ENCODE measurements at regions of chr6 and their contacts with region 1.

Region 1: DNA sequence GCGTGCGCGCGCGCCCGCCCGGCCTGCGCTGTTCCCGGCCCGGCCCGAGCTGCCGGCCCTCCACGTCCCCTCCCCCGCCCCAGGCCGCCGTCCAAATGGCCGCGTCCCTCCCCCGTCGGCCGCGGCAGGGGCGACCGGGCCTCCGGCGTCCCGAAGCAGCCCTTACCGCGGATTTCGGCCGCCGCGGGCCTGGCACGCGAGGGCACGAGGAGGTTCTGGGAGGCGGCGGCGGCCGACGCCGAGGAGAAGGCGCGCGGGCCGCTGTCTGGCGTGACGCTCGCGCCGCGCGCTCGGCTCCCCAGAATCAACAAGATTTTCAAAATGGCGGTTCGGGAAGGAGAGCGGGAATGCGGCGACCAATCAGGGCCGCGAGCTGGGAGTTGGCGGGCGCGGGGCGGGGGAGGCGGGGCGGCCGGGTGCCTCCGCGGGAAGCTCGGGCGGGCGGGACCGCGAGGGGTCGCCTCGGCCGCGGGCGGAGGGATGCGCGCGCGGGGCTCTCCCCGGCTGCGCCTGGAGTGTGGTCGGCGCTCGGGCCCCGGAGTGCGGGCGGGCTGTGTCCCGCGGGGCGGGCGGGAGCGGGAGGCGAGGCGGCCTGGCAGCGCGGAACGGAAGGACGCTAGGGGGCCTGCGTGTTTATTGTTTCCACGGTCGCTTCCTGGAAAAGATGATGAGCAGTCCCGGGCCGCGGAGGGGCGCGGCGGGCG is at the start of gene DEK:
- DNase-seq: peak; percentile 91
- ATAC-seq: peak; percentile 55
- H3K4me3 Mint-ChIP-seq: peak within 1 kb of the TSS; percentile 93
- H3K27ac Mint-ChIP-seq: peak within 1 kb of the TSS; percentile 99
- H3K4me1 Mint-ChIP-seq: peaks cover 48% of the 10 kb centered on the region
- H3K27me3 Mint-ChIP-seq: no peaks in the 10 kb centered on the region
- total RNA-seq, gene DEK: 201 to 273 TPM

Region 2: GRCh38 chr6:17015144-17015543 is 1249.2 kb before region 1 on chr6:
- CTCF ChIA-PET with region 1: no interaction called
- POLR2A ChIA-PET with region 1: no interaction called
- intact Hi-C with region 1: loop called in 1 of 2 experiments (anchors 10 kb)
- DNase-seq: peak; percentile 47
- ATAC-seq: peak; percentile 92
- H3K4me3 Mint-ChIP-seq: peak overlapping the region; percentile 36
- H3K27ac Mint-ChIP-seq: peak overlapping the region; percentile 38
- H3K4me1 Mint-ChIP-seq: peaks cover 17% of the 10 kb centered on the region
- H3K27me3 Mint-ChIP-seq: peaks cover 27% of the 10 kb centered on the region

Region 3: GRCh38 chr6:18155150-18155863 is 109.1 kb before region 1 on chr6 and contains the start of gene KDM1B:
- CTCF ChIA-PET with region 1: no interaction called
- POLR2A ChIA-PET with region 1: no interaction called
- intact Hi-C with region 1: loop called (anchors 1 kb)
- DNase-seq: peak; percentile 99
- ATAC-seq: peak; percentile 97
- H3K4me3 Mint-ChIP-seq: peak within 1 kb of the TSS; percentile 93
- H3K27ac Mint-ChIP-seq: peak within 1 kb of the TSS; percentile 90
- H3K4me1 Mint-ChIP-seq: peaks cover 27% of the 10 kb centered on the region
- H3K27me3 Mint-ChIP-seq: no peaks in the 10 kb centered on the region
- total RNA-seq, gene KDM1B: 13.4 to 13.9 TPM

Region 4: GRCh38 chr6:18387061-18387721 is 122.8 kb after region 1 on chr6 and contains the start of gene RNF144B:
- CTCF ChIA-PET with region 1: no interaction called
- POLR2A ChIA-PET with region 1: no interaction called
- intact Hi-C with region 1: loop called in 1 of 2 experiments (anchors 5 kb)
- DNase-seq: peak; percentile 79
- ATAC-seq: peak; percentile 93
- H3K4me3 Mint-ChIP-seq: peak within 1 kb of the TSS; percentile 92
- H3K27ac Mint-ChIP-seq: peak within 1 kb of the TSS; percentile 79
- H3K4me1 Mint-ChIP-seq: peaks cover 41% of the 10 kb centered on the region
- H3K27me3 Mint-ChIP-seq: peaks cover 2% of the 10 kb centered on the region
- total RNA-seq, gene RNF144B: 3.4 to 3.9 TPM

Region 5: DNA sequence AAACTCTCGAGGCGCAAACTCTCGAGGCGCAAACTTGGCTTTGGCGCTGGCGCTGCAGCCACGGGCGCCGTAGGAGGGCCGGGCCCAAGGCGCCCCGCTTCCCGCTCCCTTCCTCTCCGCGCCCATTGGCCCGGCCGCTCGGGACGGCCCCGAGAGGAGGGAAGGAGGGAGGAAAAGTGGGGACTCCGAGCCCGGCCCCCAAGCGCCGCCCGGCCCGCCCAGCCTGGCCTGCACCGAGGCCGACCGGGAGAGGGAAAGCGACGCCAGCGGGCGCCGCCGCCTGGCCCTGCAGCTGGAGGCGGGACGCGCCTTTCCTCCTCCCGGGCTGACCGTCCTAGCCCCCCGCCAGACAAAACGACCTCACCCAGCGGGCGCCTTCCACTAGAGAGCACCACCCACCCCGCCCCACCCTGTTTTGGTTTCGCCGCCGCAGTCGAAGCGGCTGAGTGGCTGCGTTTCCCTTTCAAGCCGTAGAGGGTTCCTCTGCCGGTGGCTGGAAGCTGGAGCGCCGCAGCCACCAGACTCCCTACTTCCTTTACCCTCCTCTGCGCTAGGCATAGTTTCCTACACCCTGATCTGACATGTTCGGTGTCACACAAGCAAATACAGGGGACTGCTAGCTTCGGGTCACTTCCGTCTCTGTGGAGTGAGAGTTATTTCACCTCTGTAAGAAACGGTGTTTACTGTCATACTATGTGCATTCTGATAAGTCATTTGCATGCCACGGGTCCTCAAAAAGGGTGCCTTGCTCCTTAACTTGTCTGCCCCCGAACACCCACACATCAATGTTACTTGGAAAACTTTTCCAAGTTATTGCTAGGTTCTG is 1948.2 kb after region 1 on chr6 and contains the start of gene MBOAT1:
- CTCF ChIA-PET with region 1: no interaction called
- POLR2A ChIA-PET with region 1: no interaction called
- intact Hi-C with region 1: loop called in 1 of 2 experiments (anchors 5 kb)
- DNase-seq: peak; percentile 85
- ATAC-seq: peak; percentile 89
- H3K4me3 Mint-ChIP-seq: peak within 1 kb of the TSS; percentile 95
- H3K27ac Mint-ChIP-seq: peak within 1 kb of the TSS; percentile 97
- H3K4me1 Mint-ChIP-seq: peaks cover 37% of the 10 kb centered on the region
- H3K27me3 Mint-ChIP-seq: no peaks in the 10 kb centered on the region
- total RNA-seq, gene MBOAT1: 13.3 to 16.1 TPM

Measured in activated CD4-positive, alpha-beta T cell treated with anti-CD3 and anti-CD28 coated beads for 36 hours (primary cell).